Sigmoid colon (tissue), 7 donors: ENCODE measurements at regions of chrX and their contacts with region 1.

Region 1: DNA sequence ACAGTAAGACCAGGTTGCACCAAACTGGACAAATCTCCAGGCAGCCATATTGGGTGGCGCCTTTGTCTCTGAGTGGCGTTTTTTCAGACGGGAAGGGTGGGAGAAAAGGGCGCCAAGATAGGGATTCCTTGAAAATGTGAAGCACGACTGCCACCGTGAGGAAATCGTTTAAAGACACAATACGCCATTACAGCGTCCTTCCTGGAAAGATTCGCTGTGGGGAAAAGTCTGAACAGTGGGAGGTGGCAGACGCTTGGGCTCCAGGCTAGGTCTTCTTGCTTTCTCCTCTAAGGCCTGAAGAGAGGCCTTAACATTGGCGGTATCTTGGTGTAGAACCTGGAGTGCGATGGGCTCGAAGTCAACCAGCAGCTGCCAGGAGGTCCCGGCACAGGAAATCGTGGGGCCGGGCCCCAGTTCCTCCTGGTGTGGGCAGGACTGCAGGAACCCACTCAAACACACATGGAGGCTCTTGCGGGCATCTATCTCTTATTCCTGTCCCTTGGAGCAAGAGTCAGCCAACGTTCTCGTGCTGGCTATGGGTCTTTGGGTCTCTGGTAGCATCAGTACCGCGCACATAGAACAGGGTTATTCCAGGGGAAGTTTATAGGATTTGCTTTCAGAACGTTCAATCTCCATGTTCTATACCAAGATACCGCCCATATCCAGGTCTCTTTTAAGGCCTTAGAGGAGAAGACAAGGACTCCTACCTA is 208.8 kb downstream of the OR13H1 start:
- DNase-seq: peak; percentile 92
- H3K4me3 ChIP-seq: peak overlapping the region in 2 of 4 donors; percentile 24 to 51
- H3K27ac ChIP-seq: peak overlapping the region in 2 of 4 donors; percentile 75 to 81
- H3K4me1 ChIP-seq: no peaks in the 10 kb centered on the region
- H3K27me3 ChIP-seq: no peaks in the 10 kb centered on the region
- CTCF ChIP-seq: no peak
- EP300 ChIP-seq: no peak
- POLR2A ChIP-seq: no peak

Region 2: DNA sequence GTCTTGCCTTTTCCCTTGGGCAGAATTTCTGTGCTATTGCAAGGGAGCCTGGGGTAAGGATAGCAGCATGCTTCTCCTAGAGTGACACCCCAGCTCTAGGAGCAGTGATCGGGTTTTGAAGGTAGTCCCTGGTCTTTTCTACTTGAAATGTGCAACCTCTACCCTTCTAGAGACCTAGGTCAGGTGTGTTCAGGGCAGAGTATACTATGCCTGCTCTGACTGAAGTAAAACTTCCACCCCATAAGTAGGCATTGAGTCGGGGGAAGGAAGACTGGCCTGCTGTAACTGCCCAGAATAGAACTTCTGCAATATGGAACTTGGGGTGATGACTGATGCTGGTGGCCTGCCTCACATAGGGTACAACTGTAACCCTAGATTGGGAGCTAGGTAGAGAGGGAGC is 613.6 kb before region 1 on chrX:
- intact Hi-C with region 1: no loop called
- DNase-seq: no peak
- H3K4me3 ChIP-seq: no peak overlapping the region
- H3K27ac ChIP-seq: no peak overlapping the region
- H3K4me1 ChIP-seq: no peaks in the 10 kb centered on the region
- H3K27me3 ChIP-seq: no peaks in the 10 kb centered on the region
- CTCF ChIP-seq: no peak
- EP300 ChIP-seq: no peak
- POLR2A ChIP-seq: no peak

Region 3: DNA sequence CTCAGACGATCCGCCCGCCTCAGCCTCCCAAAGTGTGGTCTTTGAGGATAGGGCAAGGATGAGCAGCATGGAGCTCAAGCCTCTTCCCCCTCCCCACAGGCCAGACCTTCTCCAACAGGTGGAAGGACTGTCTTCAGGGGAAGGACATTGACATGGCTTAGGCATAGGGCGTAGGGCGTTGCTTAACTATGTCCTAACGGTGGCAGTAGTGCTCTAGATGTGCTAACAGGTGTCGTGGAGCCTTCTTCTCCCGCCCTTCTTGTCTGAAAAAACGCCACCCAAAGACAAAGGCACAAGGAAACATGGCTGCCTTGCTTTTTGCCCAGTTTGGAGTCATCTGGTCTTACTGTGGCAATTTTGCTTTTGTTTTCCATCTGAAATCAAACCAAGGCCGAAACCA is 11.0 kb after region 1 on chrX:
- intact Hi-C with region 1: loop called (anchors 1 kb)
- DNase-seq: peak; percentile 94
- H3K4me3 ChIP-seq: peak overlapping the region in 2 of 4 donors; percentile 14 to 44
- H3K27ac ChIP-seq: peak overlapping the region in 2 of 4 donors; percentile 16 to 71
- H3K4me1 ChIP-seq: peaks cover 0 to 3% (median 0%) of the 10 kb centered on the region in 4 donors
- H3K27me3 ChIP-seq: no peaks in the 10 kb centered on the region
- CTCF ChIP-seq: peak in 1 of 4 experiments; percentile 43
- EP300 ChIP-seq: no peak
- POLR2A ChIP-seq: no peak

Region 4: GRCh38 chrX:131816551-131817136 is 64.0 kb after region 1 on chrX:
- intact Hi-C with region 1: loop called (anchors 5 kb)
- DNase-seq: peak; percentile 90
- H3K4me3 ChIP-seq: peak overlapping the region in 2 of 4 donors; percentile 13 to 46
- H3K27ac ChIP-seq: peak overlapping the region in 2 of 4 donors; percentile 48 to 67
- H3K4me1 ChIP-seq: no peaks in the 10 kb centered on the region
- H3K27me3 ChIP-seq: no peaks in the 10 kb centered on the region
- CTCF ChIP-seq: peak in 1 of 4 experiments; percentile 54
- EP300 ChIP-seq: no peak
- POLR2A ChIP-seq: no peak